Panc1 (cell line): ENCODE measurements at regions of chr4 and their contacts with region 1.

Region 1: GRCh38 chr4:107183155-107183774 is 147.2 kb upstream of the DKK2 start:
- DNase-seq: peak; percentile 24
- ATAC-seq: peak; percentile 87
- H3K4me3 ChIP-seq: no peak overlapping the region
- H3K27ac ChIP-seq: no peak overlapping the region
- H3K4me1 ChIP-seq: no peaks in the 10 kb centered on the region
- H3K27me3 ChIP-seq: no peaks in the 10 kb centered on the region
- CTCF ChIP-seq: peak; percentile 82

Region 2: GRCh38 chr4:107037199-107037584 is 146.1 kb before region 1 on chr4:
- CTCF ChIA-PET with region 1: no interaction called
- POLR2A ChIA-PET with region 1: no interaction called
- in situ Hi-C with region 1: no loop called
- intact Hi-C with region 1: loop called (anchors 10 kb)
- DNase-seq: no peak
- ATAC-seq: peak; percentile 68; the same call in 1 of the 2 replicates
- H3K4me3 ChIP-seq: peak overlapping the region; percentile 18 to 39; a peak in 3 of 4 replicates
- H3K27ac ChIP-seq: no peak overlapping the region
- H3K4me1 ChIP-seq: peaks cover 3% of the 10 kb centered on the region; the same call in 1 of the 2 replicates
- H3K27me3 ChIP-seq: peaks cover 10% of the 10 kb centered on the region
- CTCF ChIP-seq: peak; percentile 65